Uterus (tissue), 4 donors: ENCODE measurements at regions of chr10 and their contacts with region 1.

Region 1: DNA sequence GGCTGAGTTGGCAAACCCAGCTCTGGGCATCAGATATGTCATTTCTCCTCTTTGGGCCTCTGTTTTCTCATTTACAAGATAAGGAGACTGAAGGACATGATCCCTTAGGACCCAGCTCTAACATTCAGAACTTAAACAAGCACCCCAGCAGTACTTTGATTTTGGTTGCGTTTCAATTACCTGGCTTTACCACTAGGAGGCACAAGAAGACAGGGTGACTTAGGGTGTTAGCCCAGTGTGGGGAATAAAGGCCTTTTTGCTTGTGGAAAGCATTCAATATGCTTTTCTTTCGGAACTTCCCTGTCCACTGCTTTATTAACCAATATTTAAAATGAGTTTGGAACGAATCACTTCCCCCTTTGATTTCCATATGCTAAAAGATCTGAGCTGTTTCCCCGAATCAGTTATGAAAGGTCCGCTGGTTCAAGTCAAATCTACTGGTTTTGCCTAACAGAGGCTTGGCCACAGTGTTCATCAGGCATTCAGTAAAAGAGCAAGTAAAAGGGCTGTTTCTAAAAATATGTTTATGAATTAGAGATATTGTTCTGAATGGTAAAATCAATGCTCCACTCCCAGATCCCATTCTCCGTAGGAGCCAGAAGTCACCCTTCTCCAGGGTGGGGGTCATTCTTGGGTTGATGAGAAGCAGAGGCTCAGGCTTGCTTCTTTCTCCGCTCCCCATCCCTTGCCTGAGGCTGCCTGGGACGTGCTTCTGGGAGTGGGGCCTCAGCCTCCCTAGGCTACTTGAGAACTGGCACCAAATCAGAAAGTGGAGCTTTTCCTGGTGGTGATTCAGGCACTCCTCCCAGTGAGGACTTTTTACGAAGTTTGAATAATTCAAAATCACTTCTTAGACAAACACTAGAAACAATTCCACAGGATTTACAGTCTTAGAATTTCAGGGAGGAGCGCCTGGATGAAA is 105.5 kb downstream of the MYOF start:
- DNase-seq: peak; percentile 68 to 69
- H3K4me3 ChIP-seq: no peak overlapping the region
- H3K27ac ChIP-seq: peak overlapping the region; percentile 83 to 91
- H3K4me1 ChIP-seq: no peaks in the 10 kb centered on the region
- H3K27me3 ChIP-seq: no peaks in the 10 kb centered on the region
- CTCF ChIP-seq: peak; percentile 95 to 98 (median 96)
- POLR2A ChIP-seq: no peak

Region 2: GRCh38 chr10:93482145-93482834 is 105.7 kb after region 1 on chr10 and contains the start of gene MYOF:
- intact Hi-C with region 1: loop called (anchors 2 kb)
- DNase-seq: peak; percentile 69 to 75
- H3K4me3 ChIP-seq: peak within 1 kb of the TSS; percentile 52 to 66
- H3K27ac ChIP-seq: peak within 1 kb of the TSS; percentile 87 to 97
- H3K4me1 ChIP-seq: peaks cover 0 to 4% of the 10 kb centered on the region in 2 donors
- H3K27me3 ChIP-seq: no peaks in the 10 kb centered on the region
- CTCF ChIP-seq: peak; percentile 56 to 84 (median 71)
- POLR2A ChIP-seq: peak; percentile 61 to 62
- total RNA-seq, gene MYOF: 41.2 to 114 (median 86.9) TPM